A549 (cell line): ENCODE measurements at regions of chr15 and their contacts with region 1.

Region 1: GRCh38 chr15:67863442-67863987 is 23.7 kb upstream of the RNU6-1 start:
- DNase-seq: peak; percentile 82 to 87
- ATAC-seq: peak; percentile 97
- H3K4me3 ChIP-seq: peak overlapping the region; percentile 40
- H3K27ac ChIP-seq: peak overlapping the region; percentile 78 to 89
- H3K4me1 ChIP-seq: peaks cover 10% of the 10 kb centered on the region; the same call in 2 of the 3 replicates
- CTCF ChIP-seq: peak; percentile 98
- EP300 ChIP-seq: no peak
- POLR2A ChIP-seq: peak; percentile 37; the same call in 1 of the 2 replicates
- RAD21 ChIP-seq: peak; percentile 96 to 100

Region 2: DNA sequence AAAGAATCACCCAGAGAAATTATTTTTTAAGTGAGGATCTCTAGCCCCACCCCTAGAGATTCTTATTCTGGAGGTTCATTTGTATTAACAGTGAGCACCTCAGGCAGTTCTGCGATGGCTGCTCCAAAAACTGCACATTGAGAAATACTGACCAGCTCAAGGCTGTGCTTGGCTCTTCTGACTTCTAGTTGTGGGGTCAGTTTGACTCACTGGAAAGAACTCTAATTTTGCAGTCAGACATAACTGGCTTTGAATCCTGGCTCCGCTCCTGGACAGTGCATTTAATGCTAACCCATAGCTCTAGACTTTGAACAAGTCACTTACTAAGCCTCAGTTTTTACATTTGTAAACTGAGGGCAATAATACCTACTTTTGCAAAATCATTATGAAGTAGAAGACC is 161.8 kb before region 1 on chr15:
- CTCF ChIA-PET with region 1: no interaction called
- POLR2A ChIA-PET with region 1: no interaction called
- DNase-seq: no peak
- ATAC-seq: no peak
- H3K4me3 ChIP-seq: no peak overlapping the region
- H3K27ac ChIP-seq: no peak overlapping the region
- H3K4me1 ChIP-seq: no peaks in the 10 kb centered on the region
- CTCF ChIP-seq: no peak
- EP300 ChIP-seq: no peak
- POLR2A ChIP-seq: no peak
- RAD21 ChIP-seq: no peak

Region 3: DNA sequence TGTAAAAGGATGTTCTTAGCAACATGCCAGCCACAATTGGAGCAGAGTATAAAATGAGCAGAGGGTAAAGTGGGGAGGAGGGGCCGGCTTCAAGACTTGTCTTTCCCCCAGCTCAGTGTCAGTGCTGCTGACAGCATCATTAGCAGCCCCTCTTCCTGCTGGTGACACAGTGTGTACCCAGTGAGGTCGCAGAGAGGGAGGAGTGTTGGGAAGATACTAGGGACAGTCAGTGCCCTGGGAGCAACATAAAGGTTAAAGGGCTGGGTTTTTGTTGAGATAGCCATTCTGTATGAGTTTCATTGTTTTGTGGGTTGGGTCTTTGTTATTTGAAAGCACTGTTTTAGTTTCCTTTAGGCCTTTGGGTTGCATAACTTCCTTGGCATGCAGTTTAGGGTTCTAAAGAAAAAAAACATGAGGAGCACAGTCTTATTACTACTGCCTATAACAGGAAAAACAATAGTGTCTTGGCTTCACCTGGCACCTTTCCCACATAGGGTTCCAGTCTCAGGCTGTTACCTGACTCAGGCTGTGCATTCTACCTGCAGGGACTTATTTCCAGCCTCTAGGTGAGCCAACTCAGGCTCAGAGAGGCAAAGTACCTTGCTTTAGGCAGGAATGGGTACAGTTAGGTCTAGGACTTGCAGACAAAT is 132.3 kb before region 1 on chr15:
- CTCF ChIA-PET with region 1: no interaction called
- POLR2A ChIA-PET with region 1: no interaction called
- DNase-seq: no peak
- ATAC-seq: peak; percentile 26 to 34; a peak in 1 of 6 replicates
- H3K4me3 ChIP-seq: no peak overlapping the region
- H3K27ac ChIP-seq: no peak overlapping the region
- H3K4me1 ChIP-seq: no peaks in the 10 kb centered on the region
- CTCF ChIP-seq: no peak
- EP300 ChIP-seq: no peak
- POLR2A ChIP-seq: no peak
- RAD21 ChIP-seq: no peak

Region 4: DNA sequence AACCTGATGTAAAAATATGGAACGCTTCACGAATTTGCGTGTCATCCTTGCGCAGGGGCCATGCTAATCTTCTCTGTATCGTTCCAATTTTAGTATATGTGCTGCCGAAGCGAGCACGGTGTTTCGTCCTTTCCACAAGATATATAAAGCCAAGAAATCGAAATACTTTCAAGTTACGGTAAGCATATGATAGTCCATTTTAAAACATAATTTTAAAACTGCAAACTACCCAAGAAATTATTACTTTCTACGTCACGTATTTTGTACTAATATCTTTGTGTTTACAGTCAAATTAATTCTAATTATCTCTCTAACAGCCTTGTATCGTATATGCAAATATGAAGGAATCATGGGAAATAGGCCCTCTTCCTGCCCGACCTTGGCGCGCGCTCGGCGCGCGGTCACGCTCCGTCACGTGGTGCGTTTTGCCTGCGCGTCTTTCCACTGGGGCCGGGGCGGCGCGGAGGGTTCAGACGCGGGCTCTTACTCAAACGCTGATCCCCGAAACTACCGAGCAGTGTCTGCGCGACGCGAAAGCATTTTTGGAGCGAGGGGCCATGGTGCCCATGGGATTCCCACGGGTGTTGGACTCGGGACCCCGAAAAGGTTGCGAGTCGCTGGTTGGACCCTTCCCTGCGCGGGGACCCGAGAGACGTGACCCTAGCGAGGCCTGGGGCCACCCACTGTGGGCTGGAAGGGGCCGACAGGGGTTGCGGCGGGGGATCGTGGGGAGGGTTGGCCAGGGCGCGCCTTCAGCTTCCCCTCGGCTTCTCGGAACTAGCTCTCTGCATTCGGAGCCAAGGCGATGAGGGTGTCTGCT is 23.4 kb before region 1 on chr15 and contains the start of gene RNU6-1:
- CTCF ChIA-PET with region 1: interaction called, 11 read pairs
- POLR2A ChIA-PET with region 1: no interaction called
- DNase-seq: peak; percentile 95 to 98
- ATAC-seq: peak; percentile 62 to 84
- H3K4me3 ChIP-seq: peak within 1 kb of the TSS; percentile 69
- H3K27ac ChIP-seq: peak within 1 kb of the TSS; percentile 87 to 92
- H3K4me1 ChIP-seq: peaks cover 13% of the 10 kb centered on the region
- CTCF ChIP-seq: no peak; the same call in 2 of the 3 replicates
- EP300 ChIP-seq: no peak
- POLR2A ChIP-seq: peak; percentile 83
- RAD21 ChIP-seq: peak in 1 of 2 experiments; percentile 1; a peak in 1 of 5 replicates
- polyA plus RNA-seq, gene RNU6-1: not detected in 2 replicates

Region 5: GRCh38 chr15:67884514-67885487 is 21.3 kb after region 1 on chr15:
- CTCF ChIA-PET with region 1: interaction called, 76 read pairs
- POLR2A ChIA-PET with region 1: interaction called, 3 read pairs
- DNase-seq: peak; percentile 88 to 91
- ATAC-seq: peak; percentile 91 to 92
- H3K4me3 ChIP-seq: peak overlapping the region; percentile 40
- H3K27ac ChIP-seq: peak overlapping the region; percentile 84 to 93
- H3K4me1 ChIP-seq: peaks cover 57% of the 10 kb centered on the region
- CTCF ChIP-seq: no peak; the same call in 2 of the 3 replicates
- EP300 ChIP-seq: peak; percentile 49 to 77; a peak in 3 of 5 replicates
- POLR2A ChIP-seq: peak; percentile 41
- RAD21 ChIP-seq: peak; percentile 13 to 77; a peak in 3 of 5 replicates

Region 6: GRCh38 chr15:67998599-67999122 is 135.1 kb after region 1 on chr15:
- CTCF ChIA-PET with region 1: interaction called, 13 read pairs
- POLR2A ChIA-PET with region 1: interaction called, 3 read pairs
- DNase-seq: peak; percentile 50 to 57
- ATAC-seq: peak; percentile 68 to 72
- H3K4me3 ChIP-seq: peak overlapping the region; percentile 18; the same call in 2 of the 3 replicates
- H3K27ac ChIP-seq: peak overlapping the region; percentile 71 to 76
- H3K4me1 ChIP-seq: peaks cover 30% of the 10 kb centered on the region
- CTCF ChIP-seq: no peak
- EP300 ChIP-seq: no peak
- POLR2A ChIP-seq: no peak
- RAD21 ChIP-seq: no peak

Region 7: GRCh38 chr15:68053701-68054627 is 190.4 kb after region 1 on chr15 and contains the start of gene PIAS1:
- CTCF ChIA-PET with region 1: interaction called, 77 read pairs
- POLR2A ChIA-PET with region 1: interaction called, 8 read pairs
- DNase-seq: peak; percentile 91 to 95
- ATAC-seq: peak; percentile 92 to 95
- H3K4me3 ChIP-seq: peak within 1 kb of the TSS; percentile 90
- H3K27ac ChIP-seq: peak within 1 kb of the TSS; percentile 91 to 96
- H3K4me1 ChIP-seq: peaks cover 32% of the 10 kb centered on the region
- CTCF ChIP-seq: 0 out of 3 replicates have a peak, but pooled peaks have one; percentile 7
- EP300 ChIP-seq: no peak
- POLR2A ChIP-seq: peak; percentile 80
- RAD21 ChIP-seq: no peak; a peak in 2 of 5 replicates
- polyA plus RNA-seq, gene PIAS1: 49.5 and 53.7 TPM in 2 replicates

Region 8: DNA sequence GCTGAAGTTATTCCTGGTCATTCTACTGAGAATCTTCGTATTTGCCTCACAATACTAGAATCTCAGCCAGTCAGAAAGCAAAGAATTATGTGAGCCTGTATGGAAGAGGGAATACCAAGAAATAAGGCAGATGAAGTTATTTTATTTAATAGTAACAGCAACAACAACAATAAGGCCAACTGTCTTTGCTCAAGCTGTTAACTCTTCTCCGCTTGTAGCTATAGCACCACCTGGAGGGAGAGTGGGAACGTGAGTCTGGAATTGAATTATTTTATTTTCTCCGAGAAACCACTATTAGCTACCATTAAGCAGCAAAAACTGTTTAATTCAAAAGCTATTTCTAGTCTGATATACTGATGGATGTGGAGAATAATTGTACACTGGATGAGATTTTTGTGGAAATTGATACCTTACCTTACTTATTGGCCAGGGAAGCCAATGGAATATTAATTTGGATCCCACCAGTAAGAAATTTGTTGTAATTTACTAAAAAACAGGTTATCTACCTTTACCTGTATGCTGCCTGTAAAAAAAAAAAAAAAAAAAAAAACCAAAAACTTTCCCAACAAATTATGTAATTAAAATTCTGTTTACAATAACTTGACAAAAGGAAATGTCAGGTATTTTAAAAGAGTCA is 291.5 kb after region 1 on chr15:
- CTCF ChIA-PET with region 1: interaction called, 206 read pairs
- POLR2A ChIA-PET with region 1: interaction called, 7 read pairs
- DNase-seq: peak; percentile 39 to 77
- ATAC-seq: peak; percentile 81 to 89; a peak in 5 of 6 replicates
- H3K4me3 ChIP-seq: no peak overlapping the region
- H3K27ac ChIP-seq: no peak overlapping the region; a peak in 1 of 6 replicates
- H3K4me1 ChIP-seq: peaks cover 4% of the 10 kb centered on the region; the same call in 1 of the 3 replicates
- CTCF ChIP-seq: peak; percentile 99
- EP300 ChIP-seq: no peak
- POLR2A ChIP-seq: no peak
- RAD21 ChIP-seq: peak; percentile 96 to 97

Region 9: GRCh38 chr15:68210821-68211655 is 347.5 kb after region 1 on chr15:
- CTCF ChIA-PET with region 1: interaction called, 29 read pairs
- POLR2A ChIA-PET with region 1: no interaction called
- DNase-seq: peak; percentile 42 to 72
- ATAC-seq: peak; percentile 77 to 89
- H3K4me3 ChIP-seq: no peak overlapping the region
- H3K27ac ChIP-seq: peak overlapping the region in 1 of 2 experiments; percentile 40; a peak in 1 of 6 replicates
- H3K4me1 ChIP-seq: no peaks in the 10 kb centered on the region
- CTCF ChIP-seq: peak; percentile 74
- EP300 ChIP-seq: no peak
- POLR2A ChIP-seq: no peak
- RAD21 ChIP-seq: peak; percentile 63 to 73